Activated CD4-positive, alpha-beta T cell treated with anti-CD3 and anti-CD28 coated beads for 36 hours (primary cell): ENCODE measurements at regions of chr1 and their contacts with region 1.

Region 1: DNA sequence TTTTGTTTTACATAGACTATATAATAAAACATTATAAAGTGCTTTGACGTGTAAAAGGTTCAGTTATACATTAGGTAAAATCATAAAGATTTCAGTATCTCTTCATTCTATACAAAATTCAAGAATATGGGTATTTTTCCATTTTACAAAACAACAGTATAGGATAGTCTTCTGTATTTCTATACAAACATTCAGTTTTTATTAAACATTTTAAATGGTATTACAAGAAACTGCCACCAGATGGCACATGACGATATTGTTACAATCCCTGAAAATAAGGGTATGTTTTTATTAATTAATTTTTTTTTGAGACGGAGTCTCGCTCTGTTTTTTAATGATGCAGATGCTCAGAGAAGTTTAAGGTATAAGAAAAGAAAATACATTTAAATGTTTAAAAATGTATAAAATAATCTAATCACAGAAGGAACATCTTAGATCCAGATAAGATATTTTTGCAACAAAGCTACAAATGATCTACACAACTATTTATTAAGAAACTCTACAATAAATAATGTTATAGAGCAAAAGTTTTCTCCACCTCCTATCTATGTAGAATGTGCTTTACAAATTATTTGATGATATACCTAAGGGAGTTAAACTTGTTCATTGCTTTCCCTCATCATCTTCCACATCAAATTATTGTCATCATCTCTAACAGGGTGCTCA is 23.5 kb upstream of the RSBN1 start:
- DNase-seq: no peak
- ATAC-seq: no peak
- H3K4me3 Mint-ChIP-seq: no peak overlapping the region
- H3K27ac Mint-ChIP-seq: peak overlapping the region; percentile 55
- H3K4me1 Mint-ChIP-seq: peaks cover 4% of the 10 kb centered on the region
- H3K27me3 Mint-ChIP-seq: no peaks in the 10 kb centered on the region

Region 2: GRCh38 chr1:113534130-113534817 is 301.5 kb before region 1 on chr1:
- CTCF ChIA-PET with region 1: no interaction called
- POLR2A ChIA-PET with region 1: no interaction called
- intact Hi-C with region 1: no loop called
- DNase-seq: no peak
- ATAC-seq: no peak
- H3K4me3 Mint-ChIP-seq: no peak overlapping the region
- H3K27ac Mint-ChIP-seq: no peak overlapping the region
- H3K4me1 Mint-ChIP-seq: no peaks in the 10 kb centered on the region
- H3K27me3 Mint-ChIP-seq: no peaks in the 10 kb centered on the region

Region 3: DNA sequence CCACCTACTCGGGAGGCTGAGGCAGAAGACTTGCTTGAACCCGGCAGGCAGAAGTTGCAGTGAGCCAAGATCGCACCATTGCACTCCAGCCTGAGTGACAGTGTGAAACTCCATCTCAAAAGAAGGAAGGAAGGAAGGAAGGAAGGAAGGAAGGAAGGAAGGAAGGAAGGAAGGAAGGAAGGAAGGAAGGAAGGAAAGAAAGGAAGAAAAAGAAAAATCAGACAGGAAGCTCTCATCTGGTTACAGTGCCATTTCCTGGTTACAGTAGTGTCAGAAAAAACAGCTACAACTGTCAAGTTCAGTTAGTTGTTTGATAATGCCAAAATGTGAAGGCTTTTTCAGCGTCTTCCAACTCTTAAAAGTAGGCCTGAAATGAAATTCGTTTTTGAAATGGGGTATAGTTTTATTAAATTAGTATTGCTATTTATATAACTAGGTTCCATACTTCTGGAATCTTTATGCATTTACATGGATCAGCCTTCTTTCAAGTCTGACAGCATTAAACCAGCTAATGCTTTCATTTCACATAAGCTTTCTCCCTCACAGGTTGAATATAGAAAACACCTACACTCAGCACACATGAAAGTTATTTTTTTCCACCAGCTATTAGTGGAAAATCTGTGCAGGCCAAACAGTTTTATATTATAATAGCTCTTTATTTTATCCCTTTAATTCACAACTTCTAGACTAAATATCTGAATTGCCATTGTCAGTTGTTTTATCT is 14.5 kb after region 1 on chr1:
- CTCF ChIA-PET with region 1: interaction called, 13 read pairs
- POLR2A ChIA-PET with region 1: no interaction called
- intact Hi-C with region 1: no loop called
- DNase-seq: no peak
- ATAC-seq: no peak
- H3K4me3 Mint-ChIP-seq: no peak overlapping the region
- H3K27ac Mint-ChIP-seq: no peak overlapping the region
- H3K4me1 Mint-ChIP-seq: peaks cover 23% of the 10 kb centered on the region
- H3K27me3 Mint-ChIP-seq: no peaks in the 10 kb centered on the region

Region 4: DNA sequence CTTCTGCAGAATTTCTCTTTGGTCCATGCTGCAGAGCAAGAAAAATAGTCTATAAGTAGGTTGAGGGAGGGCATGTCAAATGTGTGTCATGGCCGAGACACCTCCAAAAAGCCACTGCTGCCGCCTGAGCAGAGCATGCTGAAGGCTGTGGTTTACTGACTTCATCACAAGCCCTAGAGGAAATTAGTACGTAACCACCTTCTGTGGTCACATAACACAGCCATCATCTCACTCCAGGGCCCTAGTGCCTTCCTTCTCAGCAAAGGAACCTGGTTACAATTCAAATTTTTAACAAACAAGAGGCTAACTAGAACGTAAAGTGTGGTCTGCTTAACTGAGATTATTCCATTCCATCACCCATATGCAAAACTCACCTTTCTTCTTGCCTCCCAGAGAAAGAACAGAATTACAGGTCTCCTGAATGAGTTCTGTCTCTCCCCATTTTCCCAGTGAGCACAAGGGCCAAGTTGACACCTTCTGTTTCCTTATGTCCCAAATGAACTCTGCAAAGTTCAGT is 35.9 kb after region 1 on chr1 and contains the start of gene PTPN22:
- CTCF ChIA-PET with region 1: interaction called, 9 read pairs
- POLR2A ChIA-PET with region 1: interaction called, 6 read pairs
- intact Hi-C with region 1: loop called in 1 of 2 experiments (anchors 2 kb)
- DNase-seq: peak; percentile 89
- ATAC-seq: peak; percentile 84
- H3K4me3 Mint-ChIP-seq: peak within 1 kb of the TSS; percentile 84
- H3K27ac Mint-ChIP-seq: peak within 1 kb of the TSS; percentile 99
- H3K4me1 Mint-ChIP-seq: peaks cover 72% of the 10 kb centered on the region
- H3K27me3 Mint-ChIP-seq: no peaks in the 10 kb centered on the region
- total RNA-seq, gene PTPN22: 42.4 to 52.6 TPM

Region 5: DNA sequence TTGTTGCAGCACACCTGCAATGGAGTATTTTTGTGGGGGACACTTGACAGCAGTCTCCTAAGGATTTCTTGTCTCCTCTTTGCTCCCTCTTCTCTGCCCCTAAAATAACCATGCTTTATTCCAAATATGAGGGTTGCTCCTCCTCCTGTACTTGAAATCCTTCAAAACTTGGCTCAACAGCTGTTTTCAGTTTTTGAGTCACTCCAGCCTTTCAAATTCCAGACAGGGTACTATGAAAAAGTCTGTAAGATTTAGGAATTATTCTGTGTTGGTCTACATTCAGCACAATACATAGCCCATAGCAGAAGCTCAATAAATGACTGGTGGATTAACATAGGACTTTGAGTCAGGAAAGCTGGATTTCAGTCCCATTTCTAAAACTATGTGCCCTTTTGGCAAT is 63.3 kb after region 1 on chr1:
- CTCF ChIA-PET with region 1: interaction called, 57 read pairs
- POLR2A ChIA-PET with region 1: no interaction called
- intact Hi-C with region 1: no loop called
- DNase-seq: no peak
- ATAC-seq: no peak
- H3K4me3 Mint-ChIP-seq: no peak overlapping the region
- H3K27ac Mint-ChIP-seq: peak overlapping the region; percentile 5
- H3K4me1 Mint-ChIP-seq: peaks cover 52% of the 10 kb centered on the region
- H3K27me3 Mint-ChIP-seq: no peaks in the 10 kb centered on the region

Region 6: DNA sequence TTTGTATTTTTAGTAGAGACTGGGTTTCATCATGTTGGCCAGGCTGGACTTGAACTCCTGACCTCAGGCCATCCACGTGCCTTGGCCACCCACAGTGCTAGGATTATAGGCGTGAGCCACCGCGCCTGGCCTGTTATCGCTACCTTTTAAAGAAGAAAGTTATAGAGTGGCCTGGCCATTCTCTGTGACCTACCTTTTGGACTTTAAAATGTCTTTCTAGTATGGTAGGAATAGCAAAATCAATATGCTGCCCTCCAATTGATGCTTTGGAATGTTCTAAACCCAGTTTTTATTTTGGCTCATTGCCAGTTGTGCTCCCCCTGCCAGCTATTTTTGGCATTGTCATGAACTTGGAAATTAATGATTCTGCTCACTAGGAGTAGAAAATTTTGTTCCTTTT is 113.2 kb after region 1 on chr1:
- CTCF ChIA-PET with region 1: interaction called, 8 read pairs
- POLR2A ChIA-PET with region 1: no interaction called
- intact Hi-C with region 1: loop called in 1 of 2 experiments (anchors 5 kb)
- DNase-seq: no peak
- ATAC-seq: no peak
- H3K4me3 Mint-ChIP-seq: no peak overlapping the region
- H3K27ac Mint-ChIP-seq: peak overlapping the region; percentile 79
- H3K4me1 Mint-ChIP-seq: peaks cover 76% of the 10 kb centered on the region
- H3K27me3 Mint-ChIP-seq: no peaks in the 10 kb centered on the region

Region 7: DNA sequence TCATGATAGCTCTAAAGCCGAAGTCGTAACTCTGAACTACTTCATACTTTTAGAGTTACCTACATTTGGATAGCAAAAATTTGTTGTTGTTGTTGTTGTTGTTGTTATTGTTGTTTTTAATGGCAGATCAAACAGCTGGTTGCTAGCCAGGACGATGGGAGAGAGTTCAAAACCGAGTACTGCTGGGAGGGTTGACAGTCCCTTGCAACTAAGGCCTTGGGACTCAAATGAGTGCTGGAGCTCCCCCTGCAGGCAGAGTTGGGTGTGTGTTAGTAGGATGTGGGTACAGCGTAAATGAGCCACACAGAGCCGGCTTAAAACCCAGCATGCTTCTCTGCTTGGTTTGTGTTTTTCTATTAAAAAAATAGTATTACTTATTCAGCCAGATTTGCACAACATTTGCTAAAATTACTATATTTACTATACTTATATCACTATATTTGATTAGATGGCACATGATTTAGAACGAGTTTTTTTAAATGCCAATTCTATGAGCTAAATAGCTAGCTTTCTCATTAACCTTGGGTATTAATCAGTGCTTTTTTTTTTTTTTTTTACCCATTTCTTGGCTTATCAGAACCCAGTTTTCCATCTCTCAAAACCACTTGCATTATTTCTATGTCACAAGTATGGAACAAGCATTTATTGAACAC is 447.1 kb after region 1 on chr1:
- CTCF ChIA-PET with region 1: no interaction called
- POLR2A ChIA-PET with region 1: no interaction called
- intact Hi-C with region 1: loop called (anchors 2 to 10 kb)
- DNase-seq: peak; percentile 92
- ATAC-seq: peak; percentile 100
- H3K4me3 Mint-ChIP-seq: no peak overlapping the region
- H3K27ac Mint-ChIP-seq: no peak overlapping the region
- H3K4me1 Mint-ChIP-seq: peaks cover 8% of the 10 kb centered on the region
- H3K27me3 Mint-ChIP-seq: peaks cover 2% of the 10 kb centered on the region